PC-3 (cell line): ENCODE measurements at regions of chr1 and their contacts with region 1.

Region 1: DNA sequence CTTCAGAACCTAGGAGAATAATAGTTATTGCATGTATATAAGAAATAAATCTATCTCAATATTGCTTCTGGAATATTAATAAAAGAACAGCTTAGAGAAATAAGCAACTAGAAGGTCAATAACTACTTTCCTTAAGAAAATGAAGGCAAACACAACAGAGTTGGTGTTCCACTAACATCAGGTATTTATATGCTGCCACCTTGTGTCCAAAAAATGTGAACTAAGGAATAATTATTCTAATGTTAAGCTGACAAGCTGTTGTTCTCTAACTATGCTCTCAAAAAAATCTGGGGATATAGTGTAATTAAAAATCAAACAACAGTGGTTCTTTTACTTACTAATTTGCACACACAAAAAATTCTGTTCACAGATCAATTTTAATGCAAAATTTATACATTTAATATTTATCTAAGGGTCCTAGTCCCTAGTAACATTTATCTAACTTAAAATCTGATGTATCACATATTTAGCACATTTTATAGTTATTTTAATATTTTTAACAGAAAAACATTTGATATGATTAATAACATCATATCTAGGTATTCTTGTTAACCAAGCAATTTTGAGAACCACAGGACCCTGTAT is 39.6 kb downstream of the UCHL5 start:
- DNase-seq: peak; percentile 75
- ATAC-seq: peak; percentile 63
- H3K4me3 ChIP-seq: no peak overlapping the region
- H3K27ac ChIP-seq: peak overlapping the region; percentile 65
- H3K4me1 ChIP-seq: peaks cover 10% of the 10 kb centered on the region
- H3K27me3 ChIP-seq: no peaks in the 10 kb centered on the region
- CTCF ChIP-seq: peak; percentile 67

Region 2: DNA sequence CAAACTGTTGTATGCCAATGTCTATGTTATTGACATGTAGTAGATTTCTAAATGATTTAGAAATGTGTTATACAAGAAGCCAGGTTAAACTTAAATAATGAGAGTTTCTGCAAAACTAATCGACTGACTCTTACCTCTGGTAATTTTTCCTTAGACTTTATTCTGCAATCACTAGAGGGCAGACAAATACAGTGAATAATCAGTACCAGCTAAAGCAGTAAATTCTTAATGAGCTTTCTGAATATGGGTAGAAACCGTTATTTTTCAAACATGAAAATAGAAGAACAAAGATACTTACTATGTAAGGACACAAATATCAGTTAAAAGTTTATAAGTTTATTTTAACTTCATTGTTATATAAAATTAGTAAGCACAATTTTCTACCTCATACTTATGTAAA is 541.9 kb before region 1 on chr1:
- CTCF ChIA-PET with region 1: no interaction called
- POLR2A ChIA-PET with region 1: no interaction called
- intact Hi-C with region 1: loop called (anchors 5 kb)
- DNase-seq: peak; percentile 62
- ATAC-seq: peak; percentile 69
- H3K4me3 ChIP-seq: no peak overlapping the region
- H3K27ac ChIP-seq: no peak overlapping the region
- H3K4me1 ChIP-seq: peaks cover 8% of the 10 kb centered on the region
- H3K27me3 ChIP-seq: no peaks in the 10 kb centered on the region
- CTCF ChIP-seq: peak; percentile 72

Region 3: DNA sequence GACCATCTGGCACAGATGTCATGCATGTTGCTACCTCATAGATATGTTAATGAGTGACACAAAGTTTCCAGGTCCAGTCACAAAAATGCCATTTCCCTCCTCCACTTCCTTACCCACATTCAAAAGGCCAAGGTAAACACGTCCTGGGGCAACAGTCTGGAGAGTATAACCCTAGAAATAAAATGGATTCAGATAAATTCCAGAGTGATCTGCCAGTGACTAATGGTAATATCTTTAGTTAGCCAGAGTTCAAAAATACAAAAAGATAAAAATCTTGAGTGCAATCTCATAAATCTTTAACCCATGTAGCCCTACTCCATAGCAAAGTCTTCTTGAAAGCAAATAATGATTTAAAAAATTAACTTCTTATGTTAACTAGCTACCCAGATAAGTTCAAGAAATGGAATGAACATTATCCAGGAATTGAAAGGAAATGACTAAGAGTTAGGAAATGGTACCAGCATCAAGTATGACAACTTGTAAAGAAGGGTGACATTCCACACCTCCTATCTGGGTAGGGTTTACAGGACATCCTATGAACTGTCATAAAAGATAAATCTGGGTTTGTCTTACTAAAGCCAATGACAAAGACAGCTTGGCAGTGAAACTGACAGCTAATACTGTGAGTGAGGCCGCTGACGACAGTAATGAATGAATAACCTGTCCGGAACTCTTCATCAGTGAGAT is 192.6 kb before region 1 on chr1:
- CTCF ChIA-PET with region 1: no interaction called
- POLR2A ChIA-PET with region 1: no interaction called
- intact Hi-C with region 1: loop called (anchors 1 kb)
- DNase-seq: peak; percentile 91
- ATAC-seq: peak; percentile 93
- H3K4me3 ChIP-seq: peak overlapping the region; percentile 44; the same call in 1 of the 2 replicates
- H3K27ac ChIP-seq: peak overlapping the region; percentile 97
- H3K4me1 ChIP-seq: peaks cover 33% of the 10 kb centered on the region
- H3K27me3 ChIP-seq: no peaks in the 10 kb centered on the region
- CTCF ChIP-seq: no peak

Region 4: GRCh38 chr1:192904438-192904895 is 115.1 kb before region 1 on chr1:
- CTCF ChIA-PET with region 1: no interaction called
- POLR2A ChIA-PET with region 1: no interaction called
- intact Hi-C with region 1: loop called (anchors 2 kb)
- DNase-seq: peak; percentile 65
- ATAC-seq: peak; percentile 93
- H3K4me3 ChIP-seq: peak overlapping the region; percentile 57
- H3K27ac ChIP-seq: peak overlapping the region; percentile 69
- H3K4me1 ChIP-seq: peaks cover 14% of the 10 kb centered on the region
- H3K27me3 ChIP-seq: no peaks in the 10 kb centered on the region
- CTCF ChIP-seq: no peak

Region 5: GRCh38 chr1:193059268-193060225 is 40.0 kb after region 1 on chr1 and contains the starts of genes RO60 and UCHL5:
- CTCF ChIA-PET with region 1: no interaction called
- POLR2A ChIA-PET with region 1: no interaction called
- intact Hi-C with region 1: loop called (anchors 1 kb)
- DNase-seq: peak; percentile 95
- ATAC-seq: peak; percentile 89
- H3K4me3 ChIP-seq: peak within 1 kb of the TSS; percentile 87
- H3K27ac ChIP-seq: peak within 1 kb of the TSS; percentile 86
- H3K4me1 ChIP-seq: peaks cover 42% of the 10 kb centered on the region
- H3K27me3 ChIP-seq: no peaks in the 10 kb centered on the region
- CTCF ChIP-seq: no peak
- total RNA-seq, gene RO60: 37.9 and 45.4 TPM in 2 replicates
- total RNA-seq, gene UCHL5: 31.3 and 32.3 TPM in 2 replicates

Region 6: GRCh38 chr1:193377472-193377871 is 357.9 kb after region 1 on chr1:
- CTCF ChIA-PET with region 1: no interaction called
- POLR2A ChIA-PET with region 1: no interaction called
- intact Hi-C with region 1: no loop called
- DNase-seq: no peak
- ATAC-seq: no peak
- H3K4me3 ChIP-seq: no peak overlapping the region
- H3K27ac ChIP-seq: no peak overlapping the region
- H3K4me1 ChIP-seq: no peaks in the 10 kb centered on the region
- H3K27me3 ChIP-seq: no peaks in the 10 kb centered on the region
- CTCF ChIP-seq: no peak

Region 7: DNA sequence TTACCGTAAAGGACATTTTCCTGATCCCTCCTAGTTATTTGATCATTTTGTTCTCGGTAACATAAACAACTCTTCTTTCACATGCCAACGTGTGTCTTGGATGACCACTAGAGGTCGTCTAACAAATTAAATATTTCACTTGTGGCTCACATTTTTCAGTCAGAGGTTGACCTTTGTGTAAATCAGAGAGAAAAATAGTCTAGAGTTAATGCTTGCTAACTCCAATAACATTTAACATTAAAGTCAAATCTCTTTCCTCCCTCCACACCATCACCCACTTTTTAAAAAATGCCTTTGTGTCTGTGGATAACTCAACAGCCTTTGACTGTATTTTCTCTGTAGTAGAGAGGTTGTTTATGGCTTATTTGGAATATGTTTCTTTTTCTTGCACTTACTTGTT is 387.4 kb after region 1 on chr1:
- CTCF ChIA-PET with region 1: no interaction called
- POLR2A ChIA-PET with region 1: no interaction called
- intact Hi-C with region 1: no loop called
- DNase-seq: peak; percentile 56
- ATAC-seq: peak; percentile 42; the same call in 1 of the 2 replicates
- H3K4me3 ChIP-seq: no peak overlapping the region
- H3K27ac ChIP-seq: no peak overlapping the region
- H3K4me1 ChIP-seq: no peaks in the 10 kb centered on the region
- H3K27me3 ChIP-seq: no peaks in the 10 kb centered on the region
- CTCF ChIP-seq: peak; percentile 74